HCT116 (cell line): ENCODE measurements at regions of chr17 and their contacts with region 1.

Region 1: GRCh38 chr17:32659419-32659842 is 172.6 kb downstream of the CDK5R1 start:
- DNase-seq: peak; percentile 35
- ATAC-seq: peak; percentile 84
- H3K4me3 ChIP-seq: no peak overlapping the region
- H3K27ac ChIP-seq: no peak overlapping the region
- H3K4me1 ChIP-seq: no peaks in the 10 kb centered on the region
- H3K27me3 ChIP-seq: no peaks in the 10 kb centered on the region
- CTCF ChIP-seq: peak; percentile 23 to 95 (median 89); a peak in 5 of 6 replicates
- POLR2A ChIP-seq: no peak
- RAD21 ChIP-seq: peak; percentile 45

Region 2: DNA sequence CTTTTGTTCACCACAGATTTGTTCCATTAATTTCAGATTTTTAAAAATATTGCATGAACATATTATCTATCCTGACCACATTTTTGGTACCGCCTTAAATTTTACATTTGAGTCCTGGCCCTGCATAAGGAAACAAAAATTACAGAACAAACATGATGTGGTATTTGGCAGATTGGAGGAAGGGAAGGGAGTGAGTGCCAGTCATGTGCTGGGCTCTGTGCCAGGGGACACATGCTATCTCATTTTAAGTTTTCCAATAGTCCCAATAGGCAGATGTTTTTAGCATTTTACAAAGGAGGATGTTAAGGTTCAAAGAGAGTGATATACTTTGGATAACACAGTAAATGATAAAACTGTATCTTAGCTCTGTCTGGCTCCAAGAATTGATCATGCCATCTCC is 12.5 kb after region 1 on chr17:
- CTCF ChIA-PET with region 1: interaction called, 13 read pairs
- POLR2A ChIA-PET with region 1: no interaction called
- RAD21 ChIA-PET with region 1: no interaction called
- intact Hi-C with region 1: no loop called
- DNase-seq: no peak
- ATAC-seq: no peak
- H3K4me3 ChIP-seq: no peak overlapping the region
- H3K27ac ChIP-seq: no peak overlapping the region
- H3K4me1 ChIP-seq: no peaks in the 10 kb centered on the region
- H3K27me3 ChIP-seq: no peaks in the 10 kb centered on the region
- CTCF ChIP-seq: no peak
- POLR2A ChIP-seq: no peak
- RAD21 ChIP-seq: no peak